Caco-2 (cell line): ENCODE measurements at regions of chr1 and their contacts with region 1.

Region 1: GRCh38 chr1:85344256-85344694 is 67.8 kb upstream of the BCL10 start:
- DNase-seq: peak; percentile 50 to 53
- H3K4me3 ChIP-seq: no peak overlapping the region
- H3K4me3 Mint-ChIP-seq: no peak overlapping the region
- H3K27ac Mint-ChIP-seq: peak overlapping the region; percentile 32
- H3K4me1 ChIP-seq: peaks cover 16% of the 10 kb centered on the region; the same call in 1 of the 2 replicates
- H3K4me1 Mint-ChIP-seq: peaks cover 21% of the 10 kb centered on the region
- H3K27me3 ChIP-seq: no peaks in the 10 kb centered on the region
- H3K27me3 Mint-ChIP-seq: no peaks in the 10 kb centered on the region
- CTCF ChIP-seq: peak in 1 of 2 experiments; percentile 78

Region 2: GRCh38 chr1:85398391-85399064 is 54.3 kb after region 1 on chr1:
- CTCF ChIA-PET with region 1: no interaction called
- POLR2A ChIA-PET with region 1: no interaction called
- intact Hi-C with region 1: loop called (anchors 1 kb)
- DNase-seq: no peak
- H3K4me3 ChIP-seq: no peak overlapping the region
- H3K4me3 Mint-ChIP-seq: no peak overlapping the region
- H3K27ac Mint-ChIP-seq: no peak overlapping the region
- H3K4me1 ChIP-seq: 0 out of 2 replicates have a peak, but pooled peaks cover 7% of the 10 kb centered on the region
- H3K4me1 Mint-ChIP-seq: no peaks in the 10 kb centered on the region
- H3K27me3 ChIP-seq: no peaks in the 10 kb centered on the region
- H3K27me3 Mint-ChIP-seq: no peaks in the 10 kb centered on the region
- CTCF ChIP-seq: no peak

Region 3: GRCh38 chr1:85502625-85503083 is 158.4 kb after region 1 on chr1:
- CTCF ChIA-PET with region 1: interaction called, 5 read pairs
- POLR2A ChIA-PET with region 1: no interaction called
- intact Hi-C with region 1: loop called (anchors 1 kb)
- DNase-seq: peak; percentile 51 to 57
- H3K4me3 ChIP-seq: no peak overlapping the region
- H3K4me3 Mint-ChIP-seq: peak overlapping the region; percentile 48
- H3K27ac Mint-ChIP-seq: peak overlapping the region; percentile 91
- H3K4me1 ChIP-seq: peaks cover 15% of the 10 kb centered on the region
- H3K4me1 Mint-ChIP-seq: peaks cover 14% of the 10 kb centered on the region
- H3K27me3 ChIP-seq: no peaks in the 10 kb centered on the region
- H3K27me3 Mint-ChIP-seq: no peaks in the 10 kb centered on the region
- CTCF ChIP-seq: peak in 1 of 2 experiments; percentile 54